ENCODE measurements at regions of chr11 and their contacts with region 1.

Region 1: DNA sequence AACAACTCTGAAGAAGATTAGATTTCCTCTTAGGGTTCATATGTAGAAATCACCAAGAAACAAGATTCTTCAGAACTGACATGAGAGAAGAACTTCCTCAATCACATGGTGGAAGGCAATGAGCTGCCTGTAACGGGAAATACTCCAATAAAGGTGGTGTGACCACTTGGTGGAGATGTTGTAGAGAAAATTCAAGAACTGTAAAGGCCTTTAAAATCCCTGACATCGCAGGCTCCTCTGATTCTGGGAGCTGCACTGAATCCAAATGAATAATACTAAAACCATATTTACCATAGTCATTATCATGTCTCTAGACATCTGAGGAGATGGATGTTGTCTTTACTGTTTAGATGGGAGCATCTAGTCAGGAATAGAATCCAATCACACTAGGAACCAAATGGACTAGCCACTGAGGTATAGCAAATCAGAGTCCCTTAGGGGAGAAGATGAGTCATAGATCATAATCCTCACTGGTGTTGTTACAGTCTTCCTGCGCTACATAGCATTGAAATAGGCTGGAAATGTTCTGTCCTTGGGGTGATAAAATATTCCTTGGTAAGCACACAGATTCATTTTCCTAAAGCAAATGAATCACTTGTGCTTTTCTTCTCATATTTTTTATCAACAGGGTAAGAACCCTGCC is 321.6 kb upstream of the TENM4 start:
- ATAC-seq: peak; percentile 84 to 99 (median 96)
- H3K4me3 ChIP-seq: no peak overlapping the region
- H3K27ac ChIP-seq: no peak overlapping the region
- H3K4me1 ChIP-seq: peaks cover 5 to 11% of the 10 kb centered on the region in 2 donors

Region 2: DNA sequence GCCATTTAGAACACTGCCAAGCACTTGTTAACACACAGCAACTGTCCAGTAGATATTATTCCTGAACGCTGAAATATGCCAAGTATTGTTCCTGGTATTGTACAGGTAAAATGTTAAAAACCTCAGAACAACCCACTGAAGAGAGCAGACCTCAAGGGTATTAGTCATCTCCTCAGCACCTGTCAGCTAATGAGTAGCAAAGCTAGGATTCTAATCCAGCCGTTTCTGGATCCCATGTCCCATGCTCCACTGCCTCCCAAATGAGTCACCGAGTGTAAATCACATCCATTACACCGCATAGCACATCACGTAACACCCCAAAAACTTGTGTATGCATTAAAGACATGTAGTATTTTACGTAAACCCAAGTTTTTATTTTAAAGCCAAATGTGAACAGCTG is 383.8 kb after region 1 on chr11:
- in situ Hi-C with region 1: loop called in 1 of 9 experiments (anchors 25 kb)
- ATAC-seq: peak in 7 of 8 experiments; percentile 43 to 99 (median 98)
- H3K4me3 ChIP-seq: no peak overlapping the region
- H3K27ac ChIP-seq: no peak overlapping the region
- H3K4me1 ChIP-seq: peaks cover 7 to 17% of the 10 kb centered on the region in 2 donors

Measured in motor neuron (in vitro differentiated cells).